Psoas muscle (tissue), 8 donors: ENCODE measurements at regions of chr15 and their contacts with region 1.

Region 1: DNA sequence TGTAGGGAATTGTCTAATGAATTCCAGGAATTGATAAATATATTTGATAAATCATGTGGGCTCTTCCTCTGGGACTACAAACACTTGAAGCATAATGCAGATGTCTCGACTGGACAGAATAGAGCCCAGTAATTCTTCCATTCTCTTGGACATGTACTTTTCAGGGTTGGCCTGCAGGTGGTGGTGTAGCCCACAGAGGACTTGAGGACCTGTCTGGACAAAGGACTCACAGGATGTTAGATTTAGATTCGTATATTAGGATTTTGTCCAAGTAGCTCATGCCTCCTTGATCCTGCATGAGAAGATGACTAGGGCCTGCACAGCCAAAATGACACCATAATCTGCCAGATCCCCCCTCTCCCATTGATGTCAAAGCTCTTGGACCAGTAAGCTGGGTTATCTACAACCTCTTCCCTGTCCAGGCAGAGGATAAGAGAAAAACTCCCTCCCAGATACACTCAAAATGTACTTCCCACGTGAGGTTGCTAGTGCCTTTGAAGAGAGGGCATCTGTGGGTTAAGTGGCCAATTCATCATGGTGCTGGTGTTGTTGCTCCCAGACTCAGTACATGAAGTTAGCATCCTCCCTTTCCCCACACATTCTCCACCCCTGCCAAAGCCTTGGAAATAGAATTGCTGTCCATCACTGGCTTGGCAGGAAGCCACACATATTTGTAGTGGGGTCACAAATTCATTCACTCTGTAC is 88.6 kb upstream of the ZNF280D start:
- DNase-seq: peak; percentile 29 to 71
- ATAC-seq: peak; percentile 59 to 91 (median 78)
- H3K4me3 ChIP-seq: no peak overlapping the region
- H3K27ac ChIP-seq: no peak overlapping the region
- H3K4me1 ChIP-seq: peaks cover 24% of the 10 kb centered on the region
- H3K27me3 ChIP-seq: no peaks in the 10 kb centered on the region
- CTCF ChIP-seq: peak; percentile 62

Region 2: GRCh38 chr15:56869573-56869972 is 47.7 kb after region 1 on chr15:
- intact Hi-C with region 1: loop called (anchors 1 to 2 kb)
- DNase-seq: peak; percentile 49 to 64
- ATAC-seq: peak in 3 of 4 donors; percentile 65 to 82 (median 73)
- H3K4me3 ChIP-seq: no peak overlapping the region
- H3K27ac ChIP-seq: no peak overlapping the region
- H3K4me1 ChIP-seq: peaks cover 19% of the 10 kb centered on the region
- H3K27me3 ChIP-seq: no peaks in the 10 kb centered on the region
- CTCF ChIP-seq: peak; percentile 71

Region 3: DNA sequence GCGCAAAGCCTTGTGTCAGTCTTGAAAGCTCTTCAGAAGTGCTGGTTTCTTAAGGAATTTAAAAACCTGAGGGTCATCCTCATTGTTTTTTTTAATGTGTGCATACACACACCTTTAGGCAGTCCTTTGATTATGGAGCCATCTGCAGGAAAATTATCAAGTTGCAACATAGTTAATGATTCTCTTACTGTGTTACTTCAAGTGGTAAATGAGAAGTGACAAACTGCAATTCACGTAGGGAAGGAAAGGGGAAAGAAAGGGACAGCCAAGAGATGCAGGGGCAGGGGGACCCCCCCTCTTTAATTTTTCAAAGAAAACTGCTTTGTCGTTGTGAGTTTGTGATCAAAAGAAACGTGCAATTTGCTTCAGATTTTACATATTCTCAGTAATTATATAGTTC is 392.0 kb after region 1 on chr15:
- intact Hi-C with region 1: loop called in 1 of 2 experiments (anchors 10 kb)
- DNase-seq: no peak
- ATAC-seq: peak in 3 of 4 donors; percentile 47 to 77 (median 59)
- H3K4me3 ChIP-seq: no peak overlapping the region
- H3K27ac ChIP-seq: no peak overlapping the region
- H3K4me1 ChIP-seq: peaks cover 24% of the 10 kb centered on the region
- H3K27me3 ChIP-seq: no peaks in the 10 kb centered on the region
- CTCF ChIP-seq: peak; percentile 54

Region 4: DNA sequence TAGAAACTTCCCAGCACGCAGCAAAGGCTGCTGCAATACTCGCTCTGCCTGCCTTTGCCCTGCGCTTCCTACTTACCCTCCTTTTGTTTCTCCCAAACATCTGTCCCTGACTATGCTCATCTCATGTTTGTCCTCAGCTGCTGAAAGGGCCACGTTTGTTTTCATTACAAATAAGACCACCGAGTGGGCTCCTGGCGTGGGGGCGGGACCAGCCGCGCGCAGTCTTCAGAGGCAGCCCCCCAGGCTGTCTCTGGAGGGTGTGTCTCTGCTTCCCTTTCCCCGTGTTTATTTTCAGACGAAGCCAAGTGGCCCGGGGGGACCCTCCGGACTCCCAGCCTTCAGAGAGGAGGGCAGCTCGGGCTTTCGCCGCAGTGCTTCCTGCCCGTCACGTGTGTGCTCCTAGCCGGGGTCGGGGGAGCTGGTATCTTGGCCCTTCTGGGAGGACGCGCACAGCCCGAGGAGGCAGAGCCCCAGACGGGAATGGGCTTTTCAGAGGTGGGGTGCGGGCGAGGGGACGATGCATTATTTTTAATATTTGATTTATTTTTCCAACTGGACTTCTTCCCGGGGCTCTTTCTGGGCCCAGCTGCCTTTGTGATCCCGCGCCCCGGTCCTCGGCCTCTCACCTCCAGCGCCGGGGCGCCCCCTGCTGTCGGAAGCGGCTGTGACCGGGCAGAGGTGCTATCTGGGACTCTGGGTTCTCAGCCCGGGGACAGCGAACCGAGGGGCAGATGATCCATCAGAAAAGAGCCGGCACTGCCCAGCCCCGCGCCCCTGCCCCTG is 484.5 kb after region 1 on chr15:
- intact Hi-C with region 1: loop called (anchors 5 to 10 kb)
- DNase-seq: peak; percentile 87 to 94
- ATAC-seq: peak; percentile 86 to 97 (median 90)
- H3K4me3 ChIP-seq: peak overlapping the region; percentile 78
- H3K27ac ChIP-seq: no peak overlapping the region
- H3K4me1 ChIP-seq: peaks cover 5% of the 10 kb centered on the region
- H3K27me3 ChIP-seq: no peaks in the 10 kb centered on the region
- CTCF ChIP-seq: peak; percentile 90